ENCODE measurements at regions of chr1 and their contacts with region 1.

Region 1: DNA sequence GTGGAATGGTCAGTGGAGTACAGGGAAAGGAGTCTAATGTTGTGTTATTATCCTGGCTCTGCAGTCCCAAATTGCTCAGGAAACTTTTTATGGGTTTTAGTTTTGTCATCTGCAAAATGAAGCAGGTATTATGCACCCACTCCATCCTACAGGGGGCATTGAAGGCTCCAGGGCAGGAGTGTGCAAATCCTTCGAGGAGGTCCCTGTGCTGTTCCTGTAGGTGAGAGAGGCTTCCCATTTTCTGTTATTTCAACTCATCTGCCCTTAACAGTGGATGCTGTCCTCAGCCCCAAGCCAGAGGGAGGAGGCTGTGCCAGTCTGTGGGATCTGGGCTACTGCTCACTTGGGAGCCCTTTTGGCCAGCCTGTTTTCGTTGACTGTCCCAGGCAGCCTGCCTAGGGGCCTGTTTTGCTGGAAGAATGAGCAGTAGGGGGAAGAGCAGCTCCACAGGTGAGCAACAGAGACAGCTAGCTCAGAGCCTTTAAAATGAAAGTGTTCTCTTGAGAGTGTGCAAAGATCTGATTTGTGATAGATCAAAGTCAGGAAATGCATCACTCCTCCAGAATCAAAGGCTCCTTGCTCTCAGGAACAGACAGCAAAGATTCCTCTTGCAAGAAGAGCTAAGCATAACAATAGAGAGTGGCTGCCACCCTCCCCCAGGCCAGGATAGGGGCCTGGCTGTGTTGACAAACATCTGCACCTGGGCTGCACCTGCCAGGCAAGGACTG is 317.6 kb upstream of the PROX1 start:
- DNase-seq: peak in 8 of 9 donors; percentile 9 to 89 (median 80)
- ATAC-seq: peak; percentile 93
- H3K4me3 ChIP-seq: no peak overlapping the region
- H3K4me3 Mint-ChIP-seq: peak overlapping the region in 8 of 10 donors; percentile 7 to 67 (median 52)
- H3K27ac ChIP-seq: peak overlapping the region; percentile 48
- H3K27ac Mint-ChIP-seq: peak overlapping the region in 8 of 9 donors; percentile 41 to 97 (median 90)
- H3K4me1 ChIP-seq: peaks cover 0 to 15% of the 10 kb centered on the region in 2 donors
- H3K4me1 Mint-ChIP-seq: peaks cover 7 to 39% (median 29%) of the 10 kb centered on the region in 7 donors
- H3K27me3 ChIP-seq: no peaks in the 10 kb centered on the region
- H3K27me3 Mint-ChIP-seq: no peaks in the 10 kb centered on the region

Region 2: DNA sequence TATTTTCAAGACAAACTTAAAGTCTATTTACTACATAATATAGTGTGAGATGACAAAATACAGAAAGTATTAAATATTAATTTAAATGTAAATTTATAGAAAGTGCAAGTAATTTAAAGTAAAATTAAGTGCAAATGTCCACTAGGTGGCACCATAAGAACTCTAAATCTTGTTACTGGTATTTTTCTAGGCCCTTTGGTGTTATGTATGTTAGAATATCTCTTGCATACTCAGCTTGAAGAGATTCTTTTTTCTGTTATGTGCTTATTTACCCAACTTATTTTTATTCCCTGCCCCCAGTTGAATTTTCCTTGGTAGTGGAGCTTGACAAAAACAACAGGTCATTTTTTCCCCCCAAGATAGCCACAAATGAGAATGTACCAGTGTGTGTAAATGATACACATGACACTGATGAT is 547.6 kb before region 1 on chr1:
- CTCF ChIA-PET with region 1: no interaction called
- POLR2A ChIA-PET with region 1: no interaction called
- intact Hi-C with region 1: loop called in 1 of 2 experiments (anchors 5 kb)
- DNase-seq: peak in 5 of 9 donors; percentile 8 to 21 (median 16)
- ATAC-seq: no peak
- H3K4me3 ChIP-seq: no peak overlapping the region
- H3K4me3 Mint-ChIP-seq: no peak overlapping the region
- H3K27ac ChIP-seq: no peak overlapping the region
- H3K27ac Mint-ChIP-seq: no peak overlapping the region
- H3K4me1 ChIP-seq: no peaks in the 10 kb centered on the region
- H3K4me1 Mint-ChIP-seq: peaks cover 0 to 8% (median 2%) of the 10 kb centered on the region in 7 donors
- H3K27me3 ChIP-seq: no peaks in the 10 kb centered on the region
- H3K27me3 Mint-ChIP-seq: no peaks in the 10 kb centered on the region

Region 3: DNA sequence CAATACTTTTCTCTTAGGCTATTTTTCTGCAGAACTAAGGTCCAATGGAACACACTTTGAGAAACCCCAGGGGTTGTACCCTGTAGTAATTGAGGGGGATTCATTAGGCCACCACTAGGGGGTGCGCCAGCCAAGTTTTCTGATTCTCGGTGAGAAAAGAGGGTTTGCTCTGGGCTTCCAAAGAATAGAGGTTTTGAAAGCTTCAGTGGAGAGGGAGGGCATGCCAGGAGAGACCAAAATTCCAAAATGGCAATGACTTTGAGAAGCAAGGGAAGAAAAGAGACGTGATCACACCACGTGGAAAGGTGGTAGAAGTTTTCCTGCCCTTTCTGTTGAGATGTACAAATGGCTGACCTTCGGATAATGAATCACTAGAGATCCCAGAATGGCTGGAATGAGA is 295.8 kb before region 1 on chr1:
- CTCF ChIA-PET with region 1: no interaction called
- POLR2A ChIA-PET with region 1: no interaction called
- intact Hi-C with region 1: loop called in 1 of 2 experiments (anchors 1 kb)
- DNase-seq: peak; percentile 12 to 60 (median 42)
- ATAC-seq: peak; percentile 61
- H3K4me3 ChIP-seq: no peak overlapping the region
- H3K4me3 Mint-ChIP-seq: no peak overlapping the region
- H3K27ac ChIP-seq: no peak overlapping the region
- H3K27ac Mint-ChIP-seq: no peak overlapping the region
- H3K4me1 ChIP-seq: no peaks in the 10 kb centered on the region
- H3K4me1 Mint-ChIP-seq: no peaks in the 10 kb centered on the region
- H3K27me3 ChIP-seq: no peaks in the 10 kb centered on the region
- H3K27me3 Mint-ChIP-seq: peaks cover 0 to 7% (median 0%) of the 10 kb centered on the region in 5 donors

Region 4: GRCh38 chr1:213761845-213762407 is 91.8 kb after region 1 on chr1:
- CTCF ChIA-PET with region 1: no interaction called
- POLR2A ChIA-PET with region 1: no interaction called
- intact Hi-C with region 1: loop called in 1 of 2 experiments (anchors 1 kb)
- DNase-seq: peak in 8 of 9 donors; percentile 24 to 76 (median 62)
- ATAC-seq: peak; percentile 96
- H3K4me3 ChIP-seq: no peak overlapping the region
- H3K4me3 Mint-ChIP-seq: peak overlapping the region in 9 of 10 donors; percentile 22 to 74 (median 56)
- H3K27ac ChIP-seq: no peak overlapping the region
- H3K27ac Mint-ChIP-seq: peak overlapping the region; percentile 26 to 93 (median 71)
- H3K4me1 ChIP-seq: peaks cover 0 to 12% of the 10 kb centered on the region in 2 donors
- H3K4me1 Mint-ChIP-seq: peaks cover 12 to 35% (median 21%) of the 10 kb centered on the region in 7 donors
- H3K27me3 ChIP-seq: no peaks in the 10 kb centered on the region
- H3K27me3 Mint-ChIP-seq: peaks cover 0 to 5% (median 0%) of the 10 kb centered on the region in 5 donors

Region 5: GRCh38 chr1:213852107-213852506 is 182.0 kb after region 1 on chr1:
- CTCF ChIA-PET with region 1: interaction called, 3 read pairs
- POLR2A ChIA-PET with region 1: no interaction called
- intact Hi-C with region 1: loop called in 1 of 2 experiments (anchors 1 kb)
- DNase-seq: peak in 7 of 9 donors; percentile 64 to 91 (median 84)
- ATAC-seq: peak; percentile 93
- H3K4me3 ChIP-seq: peak overlapping the region; percentile 12
- H3K4me3 Mint-ChIP-seq: no peak overlapping the region
- H3K27ac ChIP-seq: peak overlapping the region; percentile 62
- H3K27ac Mint-ChIP-seq: no peak overlapping the region
- H3K4me1 ChIP-seq: peaks cover 0 to 54% of the 10 kb centered on the region in 2 donors
- H3K4me1 Mint-ChIP-seq: peaks cover 5 to 28% (median 13%) of the 10 kb centered on the region in 7 donors
- H3K27me3 ChIP-seq: no peaks in the 10 kb centered on the region
- H3K27me3 Mint-ChIP-seq: peaks cover 0 to 2% (median 0%) of the 10 kb centered on the region in 5 donors

Region 6: GRCh38 chr1:213987927-213988506 is 317.9 kb after region 1 on chr1 and contains the start of gene PROX1:
- CTCF ChIA-PET with region 1: interaction called, 3 read pairs
- POLR2A ChIA-PET with region 1: no interaction called
- intact Hi-C with region 1: loop called in 1 of 2 experiments (anchors 1 kb)
- DNase-seq: peak in 7 of 9 donors; percentile 58 to 74 (median 70)
- ATAC-seq: peak; percentile 81
- H3K4me3 ChIP-seq: peak within 1 kb of the TSS; percentile 56
- H3K4me3 Mint-ChIP-seq: peak within 1 kb of the TSS; percentile 85 to 97 (median 91)
- H3K27ac ChIP-seq: no peak within 1 kb of the TSS
- H3K27ac Mint-ChIP-seq: peak within 1 kb of the TSS in 8 of 9 donors; percentile 32 to 91 (median 89)
- H3K4me1 ChIP-seq: peaks cover 0 to 45% of the 10 kb centered on the region in 2 donors
- H3K4me1 Mint-ChIP-seq: peaks cover 31 to 67% (median 60%) of the 10 kb centered on the region in 7 donors
- H3K27me3 ChIP-seq: peaks cover 0 to 37% of the 10 kb centered on the region in 2 donors
- H3K27me3 Mint-ChIP-seq: peaks cover 90 to 99% (median 95%) of the 10 kb centered on the region in 5 donors
- total RNA-seq, gene PROX1: not detected